PC-3 (cell line): ENCODE measurements at regions of chr5 and their contacts with region 1.

Region 1: DNA sequence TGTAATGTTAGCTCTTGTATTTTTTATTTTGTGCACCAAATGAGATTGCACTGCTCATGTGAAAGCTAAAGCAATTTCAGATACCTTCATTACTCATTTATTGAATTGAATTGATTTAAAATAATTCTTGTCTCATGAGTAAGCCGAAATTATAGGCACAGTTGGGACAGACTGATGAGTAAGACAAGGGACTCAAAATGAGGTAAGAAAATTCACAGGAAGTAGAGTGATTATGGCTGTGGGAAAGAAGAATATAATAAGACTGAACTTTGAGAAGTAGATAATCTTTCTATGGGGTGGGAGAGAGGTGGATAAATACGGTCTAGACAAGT is 51.1 kb downstream of the NUDT12 start:
- DNase-seq: peak; percentile 92
- ATAC-seq: peak; percentile 84
- H3K4me3 ChIP-seq: peak overlapping the region; percentile 8; the same call in 1 of the 2 replicates
- H3K27ac ChIP-seq: peak overlapping the region; percentile 91
- H3K4me1 ChIP-seq: peaks cover 44% of the 10 kb centered on the region
- H3K27me3 ChIP-seq: no peaks in the 10 kb centered on the region
- CTCF ChIP-seq: no peak

Region 2: DNA sequence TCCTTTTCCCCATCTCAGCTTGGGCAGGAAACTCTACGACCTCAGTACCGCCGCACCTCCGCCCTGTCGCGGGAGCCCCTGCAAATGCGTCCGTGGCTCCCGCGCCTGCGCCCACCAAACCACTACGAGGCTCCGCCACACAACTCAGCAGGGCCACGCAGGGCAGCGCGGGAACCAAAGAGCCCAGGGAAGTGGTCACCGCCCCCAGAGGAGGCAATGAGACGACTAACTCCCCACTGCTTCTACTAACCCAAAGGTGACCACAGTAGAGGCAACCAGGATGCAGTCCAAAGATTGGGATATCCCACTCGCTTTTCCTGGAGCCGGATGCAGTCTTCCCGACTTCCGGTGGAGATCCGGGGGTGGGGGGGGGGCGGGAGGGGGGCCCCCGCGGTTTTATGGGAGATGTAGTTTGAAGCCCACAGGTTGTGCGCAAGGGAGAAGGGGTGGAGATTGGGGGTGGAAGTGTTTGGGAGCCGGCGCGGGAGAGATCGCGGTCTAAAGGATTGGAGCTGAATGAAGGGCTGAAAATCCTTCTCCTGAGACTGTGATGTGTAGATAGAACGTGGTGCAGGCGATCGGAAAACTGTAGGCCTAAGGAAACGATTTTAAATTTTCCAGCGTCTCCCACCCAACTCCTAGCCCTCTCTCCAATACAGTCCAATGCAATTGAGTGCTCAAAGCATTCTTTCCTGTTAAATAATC is 51.1 kb after region 1 on chr5 and contains the start of gene NUDT12:
- CTCF ChIA-PET with region 1: no interaction called
- POLR2A ChIA-PET with region 1: no interaction called
- intact Hi-C with region 1: loop called (anchors 5 kb)
- DNase-seq: peak; percentile 86
- ATAC-seq: peak; percentile 91
- H3K4me3 ChIP-seq: peak within 1 kb of the TSS; percentile 77
- H3K27ac ChIP-seq: peak within 1 kb of the TSS; percentile 76
- H3K4me1 ChIP-seq: peaks cover 16% of the 10 kb centered on the region
- H3K27me3 ChIP-seq: no peaks in the 10 kb centered on the region
- CTCF ChIP-seq: no peak
- total RNA-seq, gene NUDT12: 9.2 and 10.9 TPM in 2 replicates